ENCODE measurements at regions of chr19 and their contacts with region 1.

Region 1: DNA sequence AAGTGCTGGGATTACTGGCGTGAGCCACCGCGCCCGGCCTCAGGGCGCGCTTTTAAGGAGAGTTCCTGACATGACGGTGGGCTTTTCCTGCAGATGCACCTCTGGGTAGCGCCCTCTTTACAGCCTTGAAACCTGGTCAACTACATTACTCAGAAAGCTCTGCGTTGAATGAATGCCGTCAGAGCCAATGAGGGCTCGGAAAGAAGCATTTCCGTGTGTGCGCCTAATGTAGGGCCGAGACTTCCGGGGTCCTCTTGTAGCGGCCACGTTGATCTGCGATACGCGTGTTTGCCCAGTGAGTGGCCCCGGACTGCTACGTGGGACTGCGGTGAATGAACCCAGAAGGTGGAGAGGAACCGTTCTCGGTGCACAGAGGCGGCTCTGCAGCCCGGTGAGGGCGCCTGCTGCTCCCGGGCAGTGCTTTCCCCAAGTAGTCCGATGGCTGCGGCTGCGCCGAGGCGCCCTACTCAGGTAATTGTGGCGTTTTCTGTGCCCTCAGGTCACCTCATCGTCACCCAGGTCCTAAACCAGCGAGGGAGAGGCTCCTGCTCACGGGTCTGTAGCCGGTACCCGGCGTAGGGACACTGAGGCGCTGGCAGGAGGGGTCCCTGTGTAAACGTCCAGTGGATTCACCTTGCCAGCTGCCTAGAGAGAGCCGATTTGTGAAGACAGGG is 4.9 kb upstream of the ZNF552 start:
- DNase-seq: peak; percentile 92
- H3K4me3 ChIP-seq: peak overlapping the region; percentile 80
- H3K27ac ChIP-seq: peak overlapping the region; percentile 79
- H3K4me1 ChIP-seq: no peaks in the 10 kb centered on the region
- H3K27me3 ChIP-seq: no peaks in the 10 kb centered on the region
- CTCF ChIP-seq: no peak; the same call in 1 of the 2 replicates

Region 2: GRCh38 chr19:57708641-57709361 is 110.8 kb before region 1 on chr19 and contains the start of gene ZNF154:
- CTCF ChIA-PET with region 1: no interaction called
- POLR2A ChIA-PET with region 1: interaction called, 10 read pairs
- intact Hi-C with region 1: no loop called
- DNase-seq: peak; percentile 50
- H3K4me3 ChIP-seq: peak within 1 kb of the TSS; percentile 42
- H3K27ac ChIP-seq: no peak within 1 kb of the TSS
- H3K4me1 ChIP-seq: no peaks in the 10 kb centered on the region
- H3K27me3 ChIP-seq: no peaks in the 10 kb centered on the region
- CTCF ChIP-seq: no peak
- total RNA-seq, gene ZNF154: 4.0 and 4.4 TPM in 2 replicates

Region 3: GRCh38 chr19:58009666-58010371 is 190.2 kb after region 1 on chr19:
- CTCF ChIA-PET with region 1: no interaction called
- POLR2A ChIA-PET with region 1: no interaction called
- intact Hi-C with region 1: loop called (anchors 5 kb)
- DNase-seq: peak; percentile 91
- H3K4me3 ChIP-seq: peak overlapping the region; percentile 59
- H3K27ac ChIP-seq: peak overlapping the region; percentile 77
- H3K4me1 ChIP-seq: peaks cover 5% of the 10 kb centered on the region
- H3K27me3 ChIP-seq: no peaks in the 10 kb centered on the region
- CTCF ChIP-seq: no peak

Measured in A673 (cell line).